ENCODE measurements at regions of chr10 and their contacts with region 1.

Region 1: DNA sequence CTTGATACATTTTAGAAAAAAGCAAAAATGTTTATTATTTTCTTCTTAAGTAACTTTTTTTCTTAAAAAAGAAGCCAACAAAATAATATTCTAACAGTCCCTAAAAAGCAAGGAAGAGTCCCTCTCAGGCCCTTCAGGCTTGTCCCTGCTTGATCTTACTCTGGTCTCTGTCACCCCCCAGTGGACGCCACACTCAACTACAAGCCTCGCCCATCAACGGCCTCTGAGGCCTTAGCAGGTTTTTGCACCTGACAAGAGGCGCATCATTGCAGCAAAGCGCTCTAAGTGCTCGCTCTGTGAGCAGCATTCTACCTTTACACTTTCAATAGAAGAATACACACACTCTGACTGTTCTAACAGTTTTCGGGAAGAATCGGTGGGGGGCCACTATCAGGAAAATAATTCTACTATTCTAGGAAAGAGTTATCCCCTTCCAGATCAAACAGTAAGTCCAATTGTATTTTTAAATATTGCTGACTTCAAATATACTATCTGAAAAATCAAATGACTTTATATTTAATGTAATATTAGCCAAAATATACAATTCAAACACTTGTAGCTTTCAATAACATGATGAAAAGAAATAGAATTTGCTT is 139.2 kb downstream of the USP6NL start:
- DNase-seq: peak; percentile 71
- H3K4me3 Mint-ChIP-seq: no peak overlapping the region
- H3K27ac Mint-ChIP-seq: no peak overlapping the region
- H3K4me1 Mint-ChIP-seq: peaks cover 5% of the 10 kb centered on the region
- H3K27me3 Mint-ChIP-seq: no peaks in the 10 kb centered on the region
- CTCF ChIP-seq: peak; percentile 94

Region 2: GRCh38 chr10:10699427-10699826 is 772.8 kb before region 1 on chr10:
- CTCF ChIA-PET with region 1: no interaction called
- POLR2A ChIA-PET with region 1: no interaction called
- intact Hi-C with region 1: loop called (anchors 5 kb)
- DNase-seq: no peak
- H3K4me3 Mint-ChIP-seq: no peak overlapping the region
- H3K27ac Mint-ChIP-seq: no peak overlapping the region
- H3K4me1 Mint-ChIP-seq: no peaks in the 10 kb centered on the region
- H3K27me3 Mint-ChIP-seq: no peaks in the 10 kb centered on the region
- CTCF ChIP-seq: no peak

Region 3: DNA sequence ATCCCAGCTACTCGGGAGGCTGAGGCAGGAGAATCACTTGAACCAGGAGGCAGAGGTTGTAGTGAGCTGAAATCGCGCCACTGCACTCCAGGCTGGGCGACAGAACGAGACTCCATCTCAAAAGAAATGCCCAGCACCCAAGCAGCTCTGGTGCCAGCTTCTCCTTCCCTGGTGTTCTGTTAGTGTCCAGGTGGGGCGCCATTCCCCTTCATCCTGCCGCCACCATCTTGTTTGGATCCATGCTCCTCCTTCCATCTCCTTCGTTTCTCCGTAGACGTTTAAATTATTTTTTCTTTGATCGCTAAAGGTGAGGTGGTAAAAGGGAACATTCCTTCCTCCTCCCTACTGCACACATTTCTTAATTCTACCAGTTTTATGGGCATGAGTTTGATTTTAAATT is 381.2 kb after region 1 on chr10:
- CTCF ChIA-PET with region 1: no interaction called
- POLR2A ChIA-PET with region 1: no interaction called
- intact Hi-C with region 1: no loop called
- DNase-seq: no peak
- H3K4me3 Mint-ChIP-seq: no peak overlapping the region
- H3K27ac Mint-ChIP-seq: peak overlapping the region; percentile 51
- H3K4me1 Mint-ChIP-seq: peaks cover 5% of the 10 kb centered on the region
- H3K27me3 Mint-ChIP-seq: no peaks in the 10 kb centered on the region
- CTCF ChIP-seq: peak; percentile 23